Aorta (tissue), 5 donors: ENCODE measurements at regions of chr2 and their contacts with region 1.

Region 1: DNA sequence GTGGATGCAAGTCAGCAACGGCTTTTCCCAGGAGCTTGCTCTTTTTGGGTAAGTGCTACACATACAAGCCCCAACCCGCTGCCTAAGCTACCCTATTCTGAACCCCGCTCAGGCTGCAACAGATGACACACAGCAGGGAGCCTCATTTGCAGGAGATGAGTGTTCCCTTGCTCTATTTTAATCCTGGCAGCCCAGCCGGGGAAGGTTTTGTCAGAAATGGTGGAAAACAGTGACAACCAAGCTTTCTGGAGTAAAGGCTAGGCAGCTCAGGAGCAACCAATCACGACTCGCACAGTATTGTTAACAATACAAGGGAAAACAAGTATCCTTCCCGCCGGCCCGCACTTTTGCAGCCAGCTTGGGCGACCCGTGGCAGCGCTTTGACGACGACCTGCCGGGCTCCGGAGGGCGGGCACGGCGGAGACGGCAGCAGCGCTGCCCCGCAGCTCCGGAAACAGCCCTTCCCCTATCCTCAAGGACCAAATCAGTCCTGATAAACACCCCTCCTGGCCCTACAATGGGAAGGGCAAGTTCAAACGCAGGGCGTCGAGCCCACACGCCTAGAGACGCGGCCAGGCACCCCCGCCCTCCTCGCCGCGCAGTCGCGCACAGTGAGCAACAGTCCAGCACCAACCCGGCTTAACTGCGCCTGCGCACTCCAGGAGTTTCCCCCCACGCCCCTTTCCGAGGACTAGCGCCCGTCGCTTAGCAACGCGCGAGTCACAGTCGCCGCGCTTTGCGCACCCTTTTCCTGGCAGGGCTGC is 74.3 kb upstream of the TSPYL6 start:
- DNase-seq: peak; percentile 98 to 99
- ATAC-seq: peak; percentile 99
- H3K4me3 ChIP-seq: peak overlapping the region; percentile 64 to 66
- H3K27ac ChIP-seq: peak overlapping the region; percentile 89 to 96
- H3K4me1 ChIP-seq: no peaks in the 10 kb centered on the region
- H3K27me3 ChIP-seq: no peaks in the 10 kb centered on the region

Region 2: DNA sequence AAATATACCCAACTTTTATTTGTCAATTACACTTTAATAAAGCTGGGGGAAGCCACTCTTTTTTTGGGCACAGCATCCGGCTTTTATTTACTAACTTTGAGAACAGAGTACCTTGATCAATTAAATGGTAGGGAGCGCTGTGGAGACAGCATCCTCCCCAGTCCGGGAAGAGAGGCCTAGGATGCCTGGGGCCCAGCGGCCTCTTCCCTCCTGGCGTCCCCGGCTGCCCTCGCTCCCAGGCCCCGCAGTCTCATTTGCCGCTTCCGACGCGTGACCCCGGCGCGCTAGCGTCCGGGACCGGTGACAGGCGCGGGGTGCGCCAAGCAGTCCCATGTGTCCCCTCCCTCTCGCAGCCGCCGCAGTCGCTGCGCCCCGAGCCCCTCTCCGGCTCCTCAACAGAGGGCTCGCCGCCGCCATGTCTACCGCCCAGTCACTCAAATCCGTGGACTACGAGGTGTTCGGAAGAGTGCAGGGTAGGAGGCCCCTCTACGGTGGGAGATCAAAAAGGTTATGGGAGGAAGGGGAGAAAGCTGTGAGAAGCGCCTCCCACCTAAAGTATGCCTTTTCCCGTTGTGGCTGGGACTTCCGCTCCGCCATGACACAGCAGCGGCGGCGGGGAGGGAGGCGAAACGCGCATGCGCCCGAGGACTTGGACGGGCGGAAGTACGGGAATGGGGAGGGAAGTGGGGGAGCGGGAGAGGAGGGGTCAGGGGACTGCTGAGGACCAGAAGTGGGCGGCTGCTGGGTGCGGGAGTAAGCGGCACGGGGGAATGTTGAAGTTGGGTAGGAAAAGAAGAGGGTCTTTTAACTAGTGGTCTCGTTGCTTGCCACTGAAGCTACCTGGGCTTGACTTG is 214.8 kb before region 1 on chr2 and contains the start of gene ACYP2:
- intact Hi-C with region 1: loop called in 1 of 2 experiments (anchors 5 kb)
- DNase-seq: peak; percentile 98 to 99
- ATAC-seq: peak; percentile 98
- H3K4me3 ChIP-seq: peak within 1 kb of the TSS; percentile 23 to 48
- H3K27ac ChIP-seq: peak within 1 kb of the TSS; percentile 78 to 88
- H3K4me1 ChIP-seq: no peaks in the 10 kb centered on the region
- H3K27me3 ChIP-seq: no peaks in the 10 kb centered on the region
- total RNA-seq, gene ACYP2: 16.3 to 21.2 TPM

Region 3: GRCh38 chr2:54206596-54206995 is 123.7 kb before region 1 on chr2:
- intact Hi-C with region 1: loop called (anchors 5 to 10 kb)
- DNase-seq: no peak
- ATAC-seq: peak; percentile 67
- H3K4me3 ChIP-seq: no peak overlapping the region
- H3K27ac ChIP-seq: no peak overlapping the region
- H3K4me1 ChIP-seq: peaks cover 0 to 5% of the 10 kb centered on the region in 2 donors
- H3K27me3 ChIP-seq: no peaks in the 10 kb centered on the region